ENCODE measurements at regions of chr12 and their contacts with region 1.

Region 1: GRCh38 chr12:30754709-30755394 is at the start of gene CAPRIN2:
- DNase-seq: peak; percentile 91
- ATAC-seq: peak; percentile 87
- H3K4me3 ChIP-seq: peak within 1 kb of the TSS; percentile 92
- H3K27ac ChIP-seq: peak within 1 kb of the TSS; percentile 53
- H3K4me1 ChIP-seq: peaks cover 38% of the 10 kb centered on the region
- H3K27me3 ChIP-seq: no peaks in the 10 kb centered on the region
- CTCF ChIP-seq: peak; percentile 39
- total RNA-seq, gene CAPRIN2: 23.1 and 33.6 TPM in 2 replicates

Region 2: DNA sequence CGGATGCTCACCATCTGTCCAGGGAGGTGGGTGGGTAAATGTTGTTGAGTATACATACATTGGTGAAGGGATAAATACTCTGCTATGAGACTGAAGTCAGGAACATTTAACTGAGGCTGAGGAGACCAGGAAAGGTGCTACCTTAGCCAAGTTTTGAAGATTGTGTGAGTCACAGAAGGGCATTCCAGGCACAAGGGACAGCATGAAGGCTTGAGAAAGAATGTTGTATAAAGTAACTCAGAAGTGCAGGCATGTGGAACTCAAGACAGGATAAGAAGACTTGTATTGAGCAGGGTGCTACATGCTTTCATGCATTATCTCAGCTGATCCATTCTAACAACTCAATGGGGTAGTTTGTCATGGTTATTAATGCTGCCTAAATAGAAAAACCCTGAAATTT is 171.9 kb before region 1 on chr12:
- CTCF ChIA-PET with region 1: no interaction called
- POLR2A ChIA-PET with region 1: no interaction called
- intact Hi-C with region 1: no loop called
- DNase-seq: no peak
- ATAC-seq: no peak
- H3K4me3 ChIP-seq: no peak overlapping the region
- H3K27ac ChIP-seq: no peak overlapping the region
- H3K4me1 ChIP-seq: no peaks in the 10 kb centered on the region
- H3K27me3 ChIP-seq: no peaks in the 10 kb centered on the region
- CTCF ChIP-seq: no peak

Region 3: DNA sequence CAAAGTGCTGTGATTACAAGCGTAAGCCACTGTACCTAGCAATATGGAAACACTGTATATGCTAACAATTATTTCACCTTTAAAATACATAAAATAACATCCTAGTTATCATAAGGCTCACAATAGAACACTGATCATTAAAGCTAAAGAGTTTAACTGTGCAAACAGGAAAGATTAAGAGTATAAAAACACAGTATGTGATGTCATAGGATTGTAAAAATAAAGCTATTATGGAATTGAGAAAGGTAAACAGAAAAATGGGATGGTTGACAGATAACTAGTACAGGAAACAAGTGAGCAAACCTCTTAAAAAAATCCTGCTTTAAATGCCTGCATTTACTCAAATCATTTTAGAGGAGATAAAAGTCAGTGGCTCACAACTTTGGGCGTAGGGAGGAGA is 48.4 kb before region 1 on chr12:
- CTCF ChIA-PET with region 1: interaction called, 10 read pairs
- POLR2A ChIA-PET with region 1: interaction called, 9 read pairs
- intact Hi-C with region 1: no loop called
- DNase-seq: peak; percentile 32
- ATAC-seq: peak; percentile 85
- H3K4me3 ChIP-seq: no peak overlapping the region
- H3K27ac ChIP-seq: peak overlapping the region; percentile 37
- H3K4me1 ChIP-seq: peaks cover 9% of the 10 kb centered on the region
- H3K27me3 ChIP-seq: no peaks in the 10 kb centered on the region
- CTCF ChIP-seq: no peak

Region 4: DNA sequence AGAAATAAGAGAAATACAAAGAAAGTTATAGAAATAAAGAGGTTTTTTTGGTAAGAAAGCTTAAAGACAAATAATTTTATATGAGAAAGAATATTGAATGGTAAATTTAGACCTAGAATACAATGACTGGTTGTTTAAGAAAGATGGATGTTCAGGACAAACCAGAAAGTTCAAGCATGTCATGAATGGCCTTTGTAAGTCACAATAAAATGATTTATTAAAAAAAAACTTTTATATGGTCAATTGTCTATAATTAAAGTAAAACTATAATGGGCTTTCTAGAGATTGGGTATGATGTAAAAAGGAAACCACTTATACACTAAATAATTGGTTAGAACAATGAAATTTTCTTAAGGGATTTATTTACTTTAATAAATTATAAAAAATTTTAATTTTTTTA is 19.7 kb after region 1 on chr12:
- CTCF ChIA-PET with region 1: no interaction called
- POLR2A ChIA-PET with region 1: no interaction called
- intact Hi-C with region 1: no loop called
- DNase-seq: no peak
- ATAC-seq: no peak
- H3K4me3 ChIP-seq: no peak overlapping the region
- H3K27ac ChIP-seq: no peak overlapping the region
- H3K4me1 ChIP-seq: peaks cover 8% of the 10 kb centered on the region; the same call in 1 of the 2 replicates
- H3K27me3 ChIP-seq: no peaks in the 10 kb centered on the region
- CTCF ChIP-seq: no peak

Region 5: DNA sequence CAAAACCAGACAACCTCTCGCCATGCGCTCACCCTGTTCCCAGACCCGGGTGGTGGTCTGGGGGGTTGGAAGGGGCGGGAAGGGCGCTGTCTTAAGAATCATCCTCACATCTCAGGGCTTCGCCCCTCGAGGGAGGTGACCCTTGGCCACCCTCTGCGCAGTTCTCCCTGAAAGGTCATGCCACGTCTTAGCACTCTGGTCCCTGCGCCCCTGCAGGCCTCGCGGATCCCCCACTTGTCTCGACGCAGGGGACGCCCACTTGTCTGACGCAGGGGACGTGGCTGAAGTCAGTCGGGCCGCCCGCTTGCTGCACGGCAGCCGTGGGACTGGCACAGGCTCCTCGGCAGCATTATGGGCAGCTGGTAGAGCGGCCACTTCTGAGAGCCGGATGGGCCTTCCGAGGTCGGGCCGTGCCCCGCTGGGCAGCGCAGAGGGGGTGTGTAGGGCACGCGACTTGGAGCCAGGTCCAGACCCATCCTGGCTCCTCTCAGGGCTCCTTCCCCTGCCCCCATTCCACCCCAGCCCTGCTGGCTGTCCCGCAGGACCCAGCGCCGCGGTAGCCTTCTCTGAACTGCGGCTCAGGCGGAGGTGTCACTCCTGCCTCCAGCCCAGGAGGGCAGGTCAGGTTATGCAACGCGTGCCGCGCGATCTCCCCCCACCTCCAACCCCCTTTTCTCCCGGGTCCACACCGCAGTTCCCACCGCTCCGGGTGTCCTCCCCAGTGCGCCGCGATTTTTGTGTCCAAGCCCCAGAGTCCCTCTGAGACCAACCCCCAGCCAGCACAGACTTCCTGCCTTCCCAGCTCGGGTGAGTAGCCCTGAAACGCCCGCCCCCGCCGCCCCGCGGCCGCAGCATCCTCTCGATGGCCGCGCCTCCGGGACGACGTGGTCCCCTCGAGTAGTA is 40.8 kb after region 1 on chr12:
- CTCF ChIA-PET with region 1: interaction called, 7 read pairs
- POLR2A ChIA-PET with region 1: interaction called, 15 read pairs
- intact Hi-C with region 1: loop called (anchors 1 kb)
- DNase-seq: peak; percentile 77
- ATAC-seq: peak; percentile 25
- H3K4me3 ChIP-seq: peak overlapping the region; percentile 80
- H3K27ac ChIP-seq: peak overlapping the region; percentile 100
- H3K4me1 ChIP-seq: peaks cover 58% of the 10 kb centered on the region
- H3K27me3 ChIP-seq: no peaks in the 10 kb centered on the region
- CTCF ChIP-seq: no peak

Region 6: DNA sequence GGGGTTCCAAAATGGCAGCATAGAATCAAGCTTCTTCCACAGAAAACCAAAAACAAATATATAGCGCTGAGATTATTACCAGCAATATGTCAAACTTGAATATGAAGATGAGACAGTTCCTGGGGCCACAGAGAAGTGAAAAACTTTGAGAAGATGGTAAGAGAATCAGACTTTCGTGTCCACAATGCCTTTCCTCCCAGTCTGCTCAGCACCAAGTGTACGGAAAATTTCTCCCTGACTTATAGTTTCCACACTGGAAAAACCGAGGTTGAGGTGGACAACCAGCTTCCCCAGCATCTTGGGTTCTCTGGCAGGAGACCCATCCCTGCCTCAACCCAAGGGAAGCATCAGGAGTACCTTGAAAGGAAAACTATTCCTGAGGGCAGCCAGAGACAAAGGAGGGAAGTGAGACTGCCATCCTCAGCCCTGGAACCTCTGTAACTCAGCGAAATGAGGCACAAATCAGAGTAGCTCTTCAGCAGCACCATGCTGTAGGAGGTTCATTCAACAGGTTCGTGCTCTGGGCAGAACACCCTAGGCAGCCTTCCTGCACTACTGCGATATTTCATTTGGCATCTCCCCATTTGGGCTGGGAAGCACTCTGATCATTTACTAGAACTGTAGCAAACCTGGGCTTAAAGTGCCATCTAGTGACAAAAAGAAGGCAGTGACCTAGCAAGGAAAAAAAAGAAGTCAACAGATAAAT is 52.3 kb after region 1 on chr12:
- CTCF ChIA-PET with region 1: no interaction called
- POLR2A ChIA-PET with region 1: interaction called, 7 read pairs
- intact Hi-C with region 1: loop called (anchors 1 kb)
- DNase-seq: peak; percentile 80
- ATAC-seq: peak; percentile 93
- H3K4me3 ChIP-seq: peak overlapping the region; percentile 11; the same call in 1 of the 2 replicates
- H3K27ac ChIP-seq: no peak overlapping the region
- H3K4me1 ChIP-seq: peaks cover 14% of the 10 kb centered on the region
- H3K27me3 ChIP-seq: no peaks in the 10 kb centered on the region
- CTCF ChIP-seq: peak; percentile 81

Measured in PC-3 (cell line).